A549 (cell line): ENCODE measurements at regions of chr2 and their contacts with region 1.

Region 1: GRCh38 chr2:46461011-46461674 is 18.2 kb upstream of the TMEM247 start:
- DNase-seq: peak; percentile 66 to 76
- ATAC-seq: peak; percentile 40 to 78; a peak in 4 of 6 replicates
- H3K4me3 ChIP-seq: no peak overlapping the region
- H3K27ac ChIP-seq: peak overlapping the region; percentile 29 to 79
- H3K4me1 ChIP-seq: peaks cover 16% of the 10 kb centered on the region
- CTCF ChIP-seq: peak; percentile 98
- EP300 ChIP-seq: no peak
- POLR2A ChIP-seq: no peak
- RAD21 ChIP-seq: peak; percentile 100

Region 2: GRCh38 chr2:46002507-46002883 is 458.6 kb before region 1 on chr2:
- CTCF ChIA-PET with region 1: interaction called, 10 read pairs
- POLR2A ChIA-PET with region 1: no interaction called
- DNase-seq: peak in 1 of 2 experiments; percentile 37
- ATAC-seq: peak in 1 of 2 experiments; percentile 53; a peak in 2 of 6 replicates
- H3K4me3 ChIP-seq: no peak overlapping the region
- H3K27ac ChIP-seq: no peak overlapping the region
- H3K4me1 ChIP-seq: 0 out of 3 replicates have a peak, but pooled peaks cover 9% of the 10 kb centered on the region
- CTCF ChIP-seq: no peak
- EP300 ChIP-seq: no peak
- POLR2A ChIP-seq: no peak
- RAD21 ChIP-seq: no peak

Region 3: DNA sequence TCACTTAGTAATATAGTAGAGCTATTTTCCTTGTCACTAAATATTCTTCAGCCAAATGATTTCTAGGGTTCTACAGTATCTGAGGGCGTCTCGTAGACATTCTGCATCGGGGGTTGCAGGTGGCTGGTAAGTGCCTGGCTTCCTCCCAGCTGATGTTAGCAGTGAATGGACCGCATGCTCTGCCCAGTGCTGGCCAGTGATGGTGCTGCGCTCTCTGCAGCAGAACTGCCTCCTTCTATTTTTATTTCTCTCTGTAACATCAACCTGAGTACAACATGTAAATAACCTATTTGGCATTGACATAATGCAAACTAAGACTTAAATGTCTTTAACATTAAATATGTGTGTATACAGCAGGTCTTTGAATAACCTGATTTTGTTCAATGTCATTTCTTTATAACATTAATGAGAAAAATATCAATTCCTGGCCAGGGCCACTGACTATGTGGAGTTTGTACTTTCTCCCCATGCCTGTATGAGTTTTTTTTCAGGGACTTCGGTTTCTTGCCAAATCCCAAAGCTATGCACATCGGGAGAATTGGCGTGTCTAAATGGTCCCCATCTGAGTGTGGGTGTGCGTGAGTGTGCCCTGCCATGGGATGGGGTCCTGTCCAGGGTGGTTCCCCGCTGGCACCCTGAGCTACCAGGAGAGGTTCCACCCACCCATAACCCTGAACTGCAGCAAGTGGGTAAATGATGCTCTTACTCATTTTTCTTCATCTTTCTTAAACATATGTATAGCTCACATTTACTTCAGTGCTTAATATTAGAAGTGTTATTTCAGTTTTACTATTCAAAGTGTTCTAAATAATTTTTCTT is 442.2 kb before region 1 on chr2:
- CTCF ChIA-PET with region 1: interaction called, 19 read pairs
- POLR2A ChIA-PET with region 1: no interaction called
- DNase-seq: no peak
- ATAC-seq: peak; percentile 72 to 80; a peak in 4 of 6 replicates
- H3K4me3 ChIP-seq: no peak overlapping the region
- H3K27ac ChIP-seq: no peak overlapping the region
- H3K4me1 ChIP-seq: peaks cover 5% of the 10 kb centered on the region; the same call in 2 of the 3 replicates
- CTCF ChIP-seq: no peak
- EP300 ChIP-seq: no peak
- POLR2A ChIP-seq: no peak
- RAD21 ChIP-seq: no peak

Region 4: GRCh38 chr2:46385786-46386577 is 75.2 kb before region 1 on chr2:
- CTCF ChIA-PET with region 1: interaction called, 15 read pairs
- POLR2A ChIA-PET with region 1: no interaction called
- DNase-seq: peak in 1 of 2 experiments; percentile 39
- ATAC-seq: no peak
- H3K4me3 ChIP-seq: no peak overlapping the region
- H3K27ac ChIP-seq: peak overlapping the region; percentile 71 to 85
- H3K4me1 ChIP-seq: peaks cover 20% of the 10 kb centered on the region
- CTCF ChIP-seq: no peak
- EP300 ChIP-seq: peak; percentile 67 to 70; a peak in 2 of 5 replicates
- POLR2A ChIP-seq: no peak
- RAD21 ChIP-seq: no peak; a peak in 1 of 5 replicates

Region 5: DNA sequence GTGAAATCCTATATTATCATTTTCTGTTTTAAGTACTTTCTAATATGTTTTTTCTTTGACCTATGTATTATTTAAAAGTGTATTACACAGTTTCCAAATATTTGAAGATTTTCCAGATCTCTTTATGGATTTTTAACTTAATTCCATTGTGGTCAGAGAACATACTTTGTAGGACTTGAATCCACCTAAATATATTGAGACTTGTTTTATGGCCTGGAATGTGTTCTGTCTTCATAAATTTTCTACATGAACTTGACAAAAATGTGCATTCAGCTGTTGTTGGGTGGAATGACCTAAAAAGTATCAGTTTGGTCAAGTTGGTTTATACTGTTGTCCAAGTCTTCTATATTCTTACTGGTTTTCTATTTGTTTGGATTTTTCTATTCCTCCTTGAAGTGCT is 15.6 kb before region 1 on chr2:
- CTCF ChIA-PET with region 1: interaction called, 13 read pairs
- POLR2A ChIA-PET with region 1: no interaction called
- DNase-seq: no peak
- ATAC-seq: no peak
- H3K4me3 ChIP-seq: no peak overlapping the region
- H3K27ac ChIP-seq: no peak overlapping the region
- H3K4me1 ChIP-seq: 0 out of 3 replicates have a peak, but pooled peaks cover 4% of the 10 kb centered on the region
- CTCF ChIP-seq: no peak
- EP300 ChIP-seq: no peak
- POLR2A ChIP-seq: no peak
- RAD21 ChIP-seq: no peak